Panc1 (cell line): ENCODE measurements at regions of chr2 and their contacts with region 1.

Region 1: GRCh38 chr2:121128754-121129659 is 156.0 kb downstream of the TFCP2L1 start:
- DNase-seq: no peak
- ATAC-seq: no peak
- H3K4me3 ChIP-seq: no peak overlapping the region
- H3K27ac ChIP-seq: no peak overlapping the region
- H3K4me1 ChIP-seq: no peaks in the 10 kb centered on the region
- H3K27me3 ChIP-seq: peaks cover 5% of the 10 kb centered on the region; the same call in 1 of the 2 replicates
- CTCF ChIP-seq: peak; percentile 77; the same call in 1 of the 2 replicates

Region 2: GRCh38 chr2:120539937-120540718 is 588.9 kb before region 1 on chr2:
- CTCF ChIA-PET with region 1: no interaction called
- POLR2A ChIA-PET with region 1: no interaction called
- in situ Hi-C with region 1: no loop called
- intact Hi-C with region 1: no loop called
- DNase-seq: no peak
- ATAC-seq: peak; percentile 57
- H3K4me3 ChIP-seq: no peak overlapping the region
- H3K27ac ChIP-seq: no peak overlapping the region
- H3K4me1 ChIP-seq: no peaks in the 10 kb centered on the region
- H3K27me3 ChIP-seq: no peaks in the 10 kb centered on the region; the same call in 1 of the 2 replicates
- CTCF ChIP-seq: no peak

Region 3: GRCh38 chr2:121356058-121356640 is 227.1 kb after region 1 on chr2:
- CTCF ChIA-PET with region 1: interaction called, 14 read pairs
- POLR2A ChIA-PET with region 1: no interaction called
- in situ Hi-C with region 1: no loop called
- intact Hi-C with region 1: no loop called
- DNase-seq: peak; percentile 35
- ATAC-seq: peak; percentile 76
- H3K4me3 ChIP-seq: no peak overlapping the region
- H3K27ac ChIP-seq: no peak overlapping the region
- H3K4me1 ChIP-seq: peaks cover 13% of the 10 kb centered on the region
- H3K27me3 ChIP-seq: no peaks in the 10 kb centered on the region
- CTCF ChIP-seq: peak; percentile 87

Region 4: DNA sequence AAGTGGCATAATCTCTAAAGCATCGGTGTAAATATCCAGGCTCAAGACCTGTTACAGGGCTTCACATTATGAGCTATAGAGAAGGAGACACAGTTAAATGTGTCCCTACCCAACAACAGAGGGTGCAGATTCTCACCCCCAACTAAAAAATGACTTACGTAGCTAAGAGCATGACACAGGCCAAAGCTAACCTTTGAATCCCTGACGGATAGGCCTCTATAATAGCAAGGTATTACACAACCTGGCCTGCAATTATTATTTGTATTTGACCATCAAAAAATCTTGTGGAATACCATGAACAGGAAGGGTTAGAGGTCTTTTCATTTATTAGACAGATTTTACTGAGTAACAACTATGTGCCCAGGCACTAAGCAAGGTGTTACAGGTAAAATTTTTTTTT is 446.8 kb after region 1 on chr2:
- CTCF ChIA-PET with region 1: no interaction called
- POLR2A ChIA-PET with region 1: interaction called, 12 read pairs
- in situ Hi-C with region 1: no loop called
- intact Hi-C with region 1: no loop called
- DNase-seq: no peak
- ATAC-seq: no peak
- H3K4me3 ChIP-seq: no peak overlapping the region
- H3K27ac ChIP-seq: no peak overlapping the region
- H3K4me1 ChIP-seq: peaks cover 9% of the 10 kb centered on the region
- H3K27me3 ChIP-seq: no peaks in the 10 kb centered on the region
- CTCF ChIP-seq: no peak

Region 5: DNA sequence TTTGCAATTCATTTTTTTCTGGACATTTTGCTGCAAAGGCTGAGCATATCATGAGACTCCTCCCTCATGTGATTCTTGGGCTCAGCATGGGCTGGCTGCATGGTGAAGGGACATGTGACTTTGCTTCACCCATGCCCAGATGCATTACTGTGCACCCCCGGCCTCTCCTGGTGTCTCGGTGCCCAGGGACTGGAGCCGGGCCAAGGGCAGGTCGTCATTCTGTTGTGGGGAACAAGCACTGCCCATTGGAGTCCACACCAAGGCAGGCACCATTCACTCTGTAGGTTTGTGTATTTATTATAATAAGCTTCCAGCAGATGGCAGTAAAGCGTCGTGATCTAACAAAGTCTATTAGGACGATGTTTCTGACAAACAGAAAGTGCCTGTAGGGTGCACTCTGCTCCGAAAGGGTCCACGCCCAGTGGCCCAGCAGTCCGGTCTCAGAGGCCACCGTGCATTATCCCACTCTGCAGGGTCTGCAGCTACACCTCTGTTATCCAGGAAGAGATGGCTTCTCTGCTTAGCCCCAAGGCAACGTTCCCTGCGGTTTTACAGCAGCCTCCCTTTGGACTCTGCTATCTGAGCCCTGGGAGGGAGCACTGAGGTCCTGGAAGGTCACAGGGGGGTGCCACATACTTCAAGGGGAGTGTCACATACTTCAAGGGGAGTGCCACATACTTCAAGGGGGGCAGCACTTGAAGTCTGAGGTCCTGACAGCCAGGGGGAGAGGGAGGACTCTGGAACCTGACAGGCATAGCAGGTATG is 846.1 kb after region 1 on chr2:
- CTCF ChIA-PET with region 1: no interaction called
- POLR2A ChIA-PET with region 1: no interaction called
- in situ Hi-C with region 1: no loop called
- intact Hi-C with region 1: no loop called
- DNase-seq: peak; percentile 27
- ATAC-seq: peak; percentile 98
- H3K4me3 ChIP-seq: peak overlapping the region in 1 of 2 experiments; percentile 44; a peak in 2 of 4 replicates
- H3K27ac ChIP-seq: no peak overlapping the region
- H3K4me1 ChIP-seq: no peaks in the 10 kb centered on the region
- H3K27me3 ChIP-seq: 0 out of 2 replicates have a peak, but pooled peaks cover 3% of the 10 kb centered on the region
- CTCF ChIP-seq: peak; percentile 79